ENCODE measurements at regions of chr19 and their contacts with region 1.

Region 1: DNA sequence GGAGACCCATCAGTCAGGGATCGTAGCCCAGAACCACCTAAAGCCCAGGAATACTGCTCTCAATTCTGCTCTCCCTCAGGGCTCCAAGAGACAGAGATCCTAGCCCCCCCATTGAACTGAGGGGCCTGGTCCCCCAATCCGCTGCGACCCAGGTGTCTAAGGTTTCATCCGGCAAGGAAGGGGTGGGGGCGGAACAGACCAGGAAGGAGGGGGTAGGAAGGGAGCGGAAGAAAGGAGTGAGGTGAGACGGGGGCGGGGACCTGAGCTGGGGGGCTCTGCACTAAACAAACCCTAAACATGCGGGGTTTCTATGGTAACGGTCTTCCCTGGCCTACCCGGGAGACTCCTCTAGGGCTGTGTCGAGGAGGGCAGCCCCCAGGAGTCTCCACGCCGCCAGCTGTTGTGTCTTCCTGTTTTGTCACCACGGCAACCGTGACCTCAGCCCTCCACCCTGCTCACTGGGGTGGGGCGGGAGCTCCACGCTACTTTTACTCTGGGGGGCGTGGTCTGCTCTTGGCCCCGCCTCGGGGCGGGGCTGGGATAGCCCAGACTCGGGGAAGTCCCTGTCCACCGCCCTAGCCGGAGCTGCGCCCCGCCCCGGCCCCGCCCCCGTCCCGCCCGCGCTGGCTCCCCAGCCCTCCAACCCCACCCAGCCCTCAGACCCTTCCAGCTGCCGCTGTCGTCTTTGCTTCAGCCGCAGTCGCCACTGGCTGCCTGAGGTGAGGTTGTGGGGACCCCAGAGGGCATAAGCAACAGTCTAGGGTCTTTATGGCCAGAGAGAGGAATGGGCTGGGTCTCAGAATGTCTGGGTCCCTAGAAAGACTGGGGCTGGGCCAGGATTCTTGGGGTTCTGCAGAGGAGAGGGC is at the start of gene MYADM:
- DNase-seq: peak; percentile 100
- H3K4me3 ChIP-seq: peak within 1 kb of the TSS; percentile 85 to 90
- H3K4me3 Mint-ChIP-seq: peak within 1 kb of the TSS; percentile 95 to 99 (median 98)
- H3K27ac ChIP-seq: peak within 1 kb of the TSS; percentile 100
- H3K27ac Mint-ChIP-seq: peak within 1 kb of the TSS; percentile 99 to 100 (median 100)
- H3K4me1 ChIP-seq: peaks cover 30% of the 10 kb centered on the region
- H3K4me1 Mint-ChIP-seq: peaks cover 20 to 60% (median 28%) of the 10 kb centered on the region in 4 donors
- H3K27me3 ChIP-seq: no peaks in the 10 kb centered on the region
- H3K27me3 Mint-ChIP-seq: no peaks in the 10 kb centered on the region
- total RNA-seq, gene MYADM: 42.1 to 45.8 TPM

Region 2: DNA sequence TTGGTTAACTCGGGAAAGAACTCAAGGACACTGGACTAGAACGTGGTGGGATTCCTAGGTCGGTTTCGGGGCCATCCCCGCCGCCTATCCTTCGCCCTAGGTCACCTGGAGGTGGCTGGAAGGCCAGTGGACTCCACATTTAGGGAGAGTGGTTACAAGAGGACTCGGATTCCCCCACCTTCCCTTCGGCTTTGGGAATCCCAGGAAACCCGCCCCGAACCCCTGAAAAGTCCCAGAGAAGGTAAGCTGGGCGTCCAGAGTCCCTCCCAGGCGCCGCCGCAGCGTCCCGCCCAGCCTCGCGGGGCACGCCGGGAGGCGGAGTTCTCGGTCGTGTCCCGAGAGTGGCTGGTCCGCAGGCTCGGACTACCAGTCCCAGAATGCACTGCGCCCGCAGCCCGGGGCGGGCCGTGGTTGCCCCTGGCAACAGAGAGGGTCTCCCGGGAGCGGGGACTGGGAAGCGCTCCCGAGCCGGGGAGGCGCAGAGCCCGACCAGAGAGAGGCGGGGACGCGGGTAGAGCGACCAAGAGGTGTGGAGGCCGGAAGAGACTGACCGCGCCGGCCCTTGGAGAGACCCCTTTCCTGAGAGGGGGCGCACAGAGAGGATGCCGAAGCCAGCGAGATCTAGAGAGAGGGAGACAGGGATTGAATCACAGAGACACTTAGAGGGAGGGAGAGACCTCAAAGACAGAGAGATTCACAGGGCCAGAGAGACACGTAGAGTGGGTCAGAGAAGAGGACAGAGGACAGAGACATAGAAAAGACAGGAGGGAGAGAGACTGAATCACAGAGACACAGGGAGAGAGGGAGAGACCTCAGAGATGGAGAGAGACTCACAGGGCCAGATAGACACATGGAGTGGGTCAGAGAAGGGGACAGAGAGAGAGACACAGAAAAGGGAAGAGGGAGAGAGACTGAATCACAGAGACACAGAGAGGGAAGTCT is 12.0 kb after region 1 on chr19:
- CTCF ChIA-PET with region 1: interaction called, 12 read pairs
- POLR2A ChIA-PET with region 1: interaction called, 95 read pairs
- intact Hi-C with region 1: loop called (anchors 1 kb)
- DNase-seq: peak; percentile 72 to 74 (median 73)
- H3K4me3 ChIP-seq: peak overlapping the region; percentile 19 to 53
- H3K4me3 Mint-ChIP-seq: peak overlapping the region in 2 of 8 donors; percentile 73 to 79
- H3K27ac ChIP-seq: no peak overlapping the region
- H3K27ac Mint-ChIP-seq: peak overlapping the region in 5 of 7 donors; percentile 10 to 80 (median 65)
- H3K4me1 ChIP-seq: peaks cover 76% of the 10 kb centered on the region
- H3K4me1 Mint-ChIP-seq: peaks cover 27 to 61% (median 37%) of the 10 kb centered on the region in 4 donors
- H3K27me3 ChIP-seq: peaks cover 40% of the 10 kb centered on the region
- H3K27me3 Mint-ChIP-seq: peaks cover 14 to 17% of the 10 kb centered on the region in 2 donors

Region 3: DNA sequence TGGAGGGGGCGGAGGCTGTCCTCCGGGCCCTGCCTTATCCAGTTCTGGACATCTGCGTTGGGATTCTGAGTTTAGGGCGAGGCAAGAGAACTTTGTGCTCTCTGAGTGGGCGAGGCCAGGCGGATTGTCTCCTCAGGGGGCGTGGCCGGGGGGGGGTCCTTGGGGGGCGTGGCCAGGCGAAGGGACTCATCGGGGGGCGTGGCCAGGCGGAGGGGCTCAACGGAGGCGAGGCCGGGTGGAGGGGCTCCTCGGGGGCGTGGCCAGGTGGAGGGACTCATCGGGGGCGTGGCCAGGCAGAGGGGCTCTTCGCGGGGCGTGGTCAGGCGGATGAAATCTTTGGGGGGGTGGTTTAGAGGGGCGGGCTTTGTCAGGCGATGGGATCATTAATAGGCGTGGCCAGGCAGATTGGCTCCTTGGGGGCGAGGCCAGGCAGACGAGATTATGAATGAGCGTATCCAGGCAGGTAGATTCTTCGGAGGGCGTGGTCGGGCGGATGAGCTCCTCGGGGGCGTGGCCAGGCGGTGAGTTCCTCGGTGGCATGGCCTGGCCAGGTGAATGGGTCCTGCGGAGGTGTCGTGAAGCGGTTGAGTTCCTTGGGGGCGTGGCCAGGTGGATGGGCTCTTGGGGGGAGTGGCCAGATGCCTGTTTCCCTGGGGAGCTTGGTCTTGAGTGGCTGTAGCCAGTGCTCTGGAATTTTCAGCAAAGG is 31.3 kb after region 1 on chr19:
- CTCF ChIA-PET with region 1: no interaction called
- POLR2A ChIA-PET with region 1: no interaction called
- intact Hi-C with region 1: no loop called
- DNase-seq: peak in 1 of 5 donors; percentile 19
- H3K4me3 ChIP-seq: no peak overlapping the region
- H3K4me3 Mint-ChIP-seq: no peak overlapping the region
- H3K27ac ChIP-seq: no peak overlapping the region
- H3K27ac Mint-ChIP-seq: no peak overlapping the region
- H3K4me1 ChIP-seq: no peaks in the 10 kb centered on the region
- H3K4me1 Mint-ChIP-seq: peaks cover 1 to 7% (median 4%) of the 10 kb centered on the region in 4 donors
- H3K27me3 ChIP-seq: no peaks in the 10 kb centered on the region
- H3K27me3 Mint-ChIP-seq: peaks cover 33 to 42% of the 10 kb centered on the region in 2 donors

Region 4: DNA sequence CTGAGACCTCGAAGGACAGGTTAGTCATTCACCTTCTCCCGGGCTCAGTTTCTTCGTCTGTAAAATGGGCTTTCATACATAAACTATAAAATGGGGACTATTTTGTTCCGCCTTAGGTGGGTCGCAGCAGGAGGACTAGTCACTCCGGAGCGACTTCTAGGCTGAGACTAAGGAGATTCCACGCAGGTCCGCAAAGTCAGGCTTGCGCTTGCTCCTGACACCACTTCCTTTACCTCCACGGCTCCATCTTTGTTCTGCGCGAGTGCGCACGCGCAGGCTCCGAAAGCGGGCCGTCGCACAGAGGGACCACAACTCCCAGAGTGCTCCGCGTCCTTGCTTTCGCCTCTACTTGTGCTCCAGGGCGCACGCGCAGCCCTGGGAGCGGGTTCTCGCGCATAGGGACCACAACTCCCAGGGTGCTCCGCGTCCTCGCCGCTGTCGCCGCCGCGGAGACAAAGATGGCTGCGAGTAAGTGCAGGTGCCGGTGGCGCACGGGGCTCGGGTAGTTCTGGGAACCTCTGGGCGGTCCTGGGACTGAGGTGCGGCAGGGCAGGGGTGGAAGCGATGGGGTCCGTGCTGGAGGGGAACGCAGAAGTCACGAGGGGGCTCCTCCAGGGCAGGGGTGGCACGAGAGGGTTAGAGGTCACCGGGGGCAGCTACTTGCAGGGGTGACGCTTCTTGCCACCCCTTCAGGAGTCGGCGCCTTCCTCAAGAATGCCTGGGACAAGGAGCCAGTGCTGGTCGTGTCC is 235.1 kb after region 1 on chr19 and contains the start of gene NDUFA3:
- CTCF ChIA-PET with region 1: no interaction called
- POLR2A ChIA-PET with region 1: interaction called, 3 read pairs
- intact Hi-C with region 1: loop called (anchors 2 kb)
- DNase-seq: peak; percentile 96 to 99 (median 98)
- H3K4me3 ChIP-seq: peak within 1 kb of the TSS; percentile 54 to 83
- H3K4me3 Mint-ChIP-seq: peak within 1 kb of the TSS; percentile 95 to 100 (median 97)
- H3K27ac ChIP-seq: peak within 1 kb of the TSS; percentile 65
- H3K27ac Mint-ChIP-seq: peak within 1 kb of the TSS; percentile 81 to 98 (median 96)
- H3K4me1 ChIP-seq: peaks cover 17% of the 10 kb centered on the region
- H3K4me1 Mint-ChIP-seq: peaks cover 14 to 29% (median 19%) of the 10 kb centered on the region in 4 donors
- H3K27me3 ChIP-seq: no peaks in the 10 kb centered on the region
- H3K27me3 Mint-ChIP-seq: no peaks in the 10 kb centered on the region
- total RNA-seq, gene NDUFA3: 135 to 137 TPM

Region 5: GRCh38 chr19:54159352-54160181 is 292.1 kb after region 1 on chr19 and contains the start of gene LENG1:
- CTCF ChIA-PET with region 1: no interaction called
- POLR2A ChIA-PET with region 1: interaction called, 12 read pairs
- intact Hi-C with region 1: loop called (anchors 1 kb)
- DNase-seq: peak; percentile 97 to 100 (median 100)
- H3K4me3 ChIP-seq: peak within 1 kb of the TSS; percentile 61 to 99
- H3K4me3 Mint-ChIP-seq: peak within 1 kb of the TSS; percentile 99 to 100 (median 100)
- H3K27ac ChIP-seq: peak within 1 kb of the TSS; percentile 78
- H3K27ac Mint-ChIP-seq: peak within 1 kb of the TSS; percentile 93 to 100 (median 100)
- H3K4me1 ChIP-seq: peaks cover 75% of the 10 kb centered on the region
- H3K4me1 Mint-ChIP-seq: peaks cover 39 to 85% (median 58%) of the 10 kb centered on the region in 4 donors
- H3K27me3 ChIP-seq: no peaks in the 10 kb centered on the region
- H3K27me3 Mint-ChIP-seq: no peaks in the 10 kb centered on the region
- total RNA-seq, gene LENG1: 19.6 to 22.7 TPM

Region 6: GRCh38 chr19:54463531-54464043 is 596.1 kb after region 1 on chr19 and contains the start of gene LENG9:
- CTCF ChIA-PET with region 1: no interaction called
- POLR2A ChIA-PET with region 1: interaction called, 9 read pairs
- intact Hi-C with region 1: loop called (anchors 5 kb)
- DNase-seq: peak; percentile 86 to 99 (median 91)
- H3K4me3 ChIP-seq: peak within 1 kb of the TSS; percentile 65 to 85
- H3K4me3 Mint-ChIP-seq: peak within 1 kb of the TSS; percentile 84 to 92 (median 89)
- H3K27ac ChIP-seq: peak within 1 kb of the TSS; percentile 81
- H3K27ac Mint-ChIP-seq: peak within 1 kb of the TSS; percentile 92 to 99 (median 95)
- H3K4me1 ChIP-seq: peaks cover 27% of the 10 kb centered on the region
- H3K4me1 Mint-ChIP-seq: peaks cover 15 to 37% (median 27%) of the 10 kb centered on the region in 4 donors
- H3K27me3 ChIP-seq: no peaks in the 10 kb centered on the region
- H3K27me3 Mint-ChIP-seq: peaks cover 0 to 2% of the 10 kb centered on the region in 2 donors
- total RNA-seq, gene LENG9: 7.2 to 7.3 TPM